ENCODE measurements at regions of chr1 and their contacts with region 1.

Region 1: DNA sequence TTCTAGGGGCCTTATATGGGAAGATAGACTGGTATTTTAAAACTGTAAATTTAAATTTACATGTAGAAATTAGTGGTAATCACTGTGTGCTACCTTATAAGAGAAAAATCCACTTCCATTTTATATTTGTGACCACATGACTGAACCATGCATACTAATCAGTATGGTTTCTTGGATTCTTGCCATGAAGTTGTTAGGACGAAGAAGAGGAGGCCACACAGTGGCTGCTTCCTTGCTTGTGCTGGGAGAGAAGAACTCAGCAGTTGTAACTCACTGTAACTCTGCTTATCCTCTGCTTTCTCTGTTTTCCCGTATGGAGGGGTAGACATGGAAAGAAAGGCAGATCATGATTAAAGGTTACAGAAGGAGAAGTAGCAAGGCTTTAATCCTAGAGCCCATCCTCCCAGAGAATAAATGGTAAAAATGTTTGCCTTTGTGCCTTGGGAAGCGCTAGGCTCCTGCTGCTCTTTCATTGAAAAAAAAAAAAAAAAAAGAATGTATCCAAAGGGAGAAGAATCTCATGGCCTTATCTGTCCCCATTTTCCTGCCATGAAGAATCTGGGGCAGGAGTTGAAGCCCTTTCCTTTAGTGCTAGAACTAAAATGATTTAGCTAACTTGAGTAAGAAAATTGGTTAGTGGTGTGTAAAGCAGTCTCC is 32.4 kb downstream of the KCTD3 start:
- DNase-seq: no peak
- ATAC-seq: no peak
- H3K4me3 ChIP-seq: no peak overlapping the region
- H3K27ac ChIP-seq: no peak overlapping the region
- H3K4me1 ChIP-seq: no peaks in the 10 kb centered on the region
- H3K27me3 ChIP-seq: no peaks in the 10 kb centered on the region

Region 2: GRCh38 chr1:215566556-215567490 is 32.7 kb before region 1 on chr1 and contains the start of gene KCTD3:
- intact Hi-C with region 1: loop called in 1 of 2 experiments (anchors 5 kb)
- DNase-seq: peak; percentile 88 to 93
- ATAC-seq: peak; percentile 92
- H3K4me3 ChIP-seq: peak within 1 kb of the TSS; percentile 54 to 96
- H3K27ac ChIP-seq: peak within 1 kb of the TSS; percentile 49 to 83
- H3K4me1 ChIP-seq: peaks cover 0 to 3% of the 10 kb centered on the region in 2 donors
- H3K27me3 ChIP-seq: no peaks in the 10 kb centered on the region
- total RNA-seq, gene KCTD3: 35.3 to 39.7 TPM

Region 3: GRCh38 chr1:215637041-215637573 is 37.6 kb after region 1 on chr1:
- intact Hi-C with region 1: no loop called
- DNase-seq: peak in 1 of 2 donors; percentile 73
- ATAC-seq: peak; percentile 78
- H3K4me3 ChIP-seq: peak overlapping the region in 1 of 2 donors; percentile 25
- H3K27ac ChIP-seq: peak overlapping the region in 1 of 2 donors; percentile 65
- H3K4me1 ChIP-seq: no peaks in the 10 kb centered on the region
- H3K27me3 ChIP-seq: no peaks in the 10 kb centered on the region